ENCODE measurements at regions of chr17 and their contacts with region 1.

Region 1: GRCh38 chr17:7021993-7022778 is 664 bp upstream of the BCL6B start:
- DNase-seq: peak; percentile 87 to 92
- ATAC-seq: peak; percentile 72 to 81 (median 78)
- H3K4me3 ChIP-seq: peak overlapping the region; percentile 63
- H3K27ac ChIP-seq: peak overlapping the region; percentile 79
- H3K4me1 ChIP-seq: peaks cover 15% of the 10 kb centered on the region
- H3K27me3 ChIP-seq: peaks cover 0 to 17% (median 7%) of the 10 kb centered on the region in 3 donors
- CTCF ChIP-seq: peak; percentile 97

Region 2: GRCh38 chr17:6913608-6914443 is 108.4 kb before region 1 on chr17:
- intact Hi-C with region 1: loop called (anchors 5 kb)
- DNase-seq: peak; percentile 77 to 83
- ATAC-seq: peak; percentile 78 to 91 (median 84)
- H3K4me3 ChIP-seq: peak overlapping the region; percentile 57
- H3K27ac ChIP-seq: no peak overlapping the region
- H3K4me1 ChIP-seq: peaks cover 5% of the 10 kb centered on the region
- H3K27me3 ChIP-seq: no peaks in the 10 kb centered on the region
- CTCF ChIP-seq: peak; percentile 82

Region 3: GRCh38 chr17:7001318-7001961 is 20.7 kb before region 1 on chr17:
- intact Hi-C with region 1: no loop called
- DNase-seq: no peak
- ATAC-seq: no peak
- H3K4me3 ChIP-seq: no peak overlapping the region
- H3K27ac ChIP-seq: no peak overlapping the region
- H3K4me1 ChIP-seq: no peaks in the 10 kb centered on the region
- H3K27me3 ChIP-seq: no peaks in the 10 kb centered on the region
- CTCF ChIP-seq: peak; percentile 35

Region 4: GRCh38 chr17:7167832-7168231 is 145.6 kb after region 1 on chr17:
- intact Hi-C with region 1: no loop called
- DNase-seq: no peak
- ATAC-seq: no peak
- H3K4me3 ChIP-seq: no peak overlapping the region
- H3K27ac ChIP-seq: no peak overlapping the region
- H3K4me1 ChIP-seq: no peaks in the 10 kb centered on the region
- H3K27me3 ChIP-seq: peaks cover 0 to 18% (median 1%) of the 10 kb centered on the region in 3 donors
- CTCF ChIP-seq: no peak

Measured in psoas muscle (tissue), 8 donors.